Activated CD4-positive, alpha-beta memory T cell treated with anti-CD3 and anti-CD28 coated beads for 36 hours (primary cell): ENCODE measurements at regions of chr7 and their contacts with region 1.

Region 1: DNA sequence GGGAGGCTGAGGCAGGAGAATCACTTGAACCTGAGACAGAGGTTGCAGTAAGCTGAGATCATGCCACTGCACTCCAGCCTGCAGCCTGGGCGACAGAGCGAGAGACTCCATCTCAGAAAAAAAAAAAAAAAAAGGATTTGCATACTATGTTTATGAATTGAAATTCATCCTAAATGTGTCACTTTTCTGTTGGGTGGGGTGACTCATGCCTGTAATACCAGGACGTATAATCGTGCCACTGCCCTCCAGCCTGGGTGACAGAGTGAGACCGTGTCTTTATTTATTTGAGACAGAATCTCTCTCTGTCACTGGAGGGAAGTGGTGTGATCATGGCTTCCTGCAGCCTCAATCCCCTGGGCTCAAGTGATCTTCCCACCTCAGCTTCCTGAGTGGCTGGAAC is 5.8 kb downstream of the ZNF212 start:
- DNase-seq: peak; percentile 82
- H3K4me3 Mint-ChIP-seq: peak overlapping the region; percentile 43
- H3K27ac Mint-ChIP-seq: peak overlapping the region; percentile 91
- H3K4me1 Mint-ChIP-seq: peaks cover 66% of the 10 kb centered on the region
- H3K27me3 Mint-ChIP-seq: no peaks in the 10 kb centered on the region

Region 2: GRCh38 chr7:149180722-149181449 is 64.4 kb before region 1 on chr7:
- CTCF ChIA-PET with region 1: no interaction called
- POLR2A ChIA-PET with region 1: no interaction called
- intact Hi-C with region 1: no loop called
- DNase-seq: no peak
- H3K4me3 Mint-ChIP-seq: no peak overlapping the region
- H3K27ac Mint-ChIP-seq: peak overlapping the region; percentile 29
- H3K4me1 Mint-ChIP-seq: no peaks in the 10 kb centered on the region
- H3K27me3 Mint-ChIP-seq: no peaks in the 10 kb centered on the region

Region 3: DNA sequence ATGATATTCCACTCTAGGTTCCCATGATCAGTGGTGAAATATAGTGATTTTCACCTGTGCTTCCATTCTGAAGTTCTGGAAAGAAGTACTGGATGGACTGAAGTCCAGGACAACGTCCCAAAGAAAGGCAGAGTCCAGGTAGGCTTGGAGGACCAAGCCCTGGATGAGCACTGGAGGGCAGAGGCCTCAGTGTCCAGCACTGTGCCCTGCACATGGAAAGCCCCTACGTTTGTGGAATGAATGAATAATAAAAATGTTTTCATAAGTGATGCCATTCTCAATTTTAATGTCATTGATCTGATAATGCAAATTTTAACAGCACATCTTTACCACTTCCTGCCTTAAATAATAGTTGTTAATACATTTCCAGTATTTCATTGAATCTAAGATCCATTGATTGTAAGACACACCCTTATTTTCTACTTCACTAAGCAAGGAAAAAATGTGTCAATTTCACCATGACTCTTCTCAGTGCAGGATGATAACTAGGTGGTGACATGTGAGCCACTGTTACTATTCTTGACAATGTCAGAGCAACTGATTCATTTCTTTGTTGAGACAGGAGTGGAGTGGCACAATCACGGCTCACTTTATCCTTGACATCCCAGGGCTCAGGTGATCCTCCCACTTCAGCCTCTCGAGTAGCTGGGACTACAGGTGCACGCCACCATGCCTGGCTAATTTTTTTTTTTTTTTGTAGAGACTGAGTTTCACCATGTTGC is 52.0 kb after region 1 on chr7:
- CTCF ChIA-PET with region 1: no interaction called
- POLR2A ChIA-PET with region 1: no interaction called
- intact Hi-C with region 1: loop called (anchors 1 kb)
- DNase-seq: peak; percentile 38
- H3K4me3 Mint-ChIP-seq: no peak overlapping the region
- H3K27ac Mint-ChIP-seq: peak overlapping the region; percentile 92
- H3K4me1 Mint-ChIP-seq: peaks cover 16% of the 10 kb centered on the region
- H3K27me3 Mint-ChIP-seq: no peaks in the 10 kb centered on the region

Region 4: GRCh38 chr7:149598721-149599306 is 353.6 kb after region 1 on chr7:
- CTCF ChIA-PET with region 1: no interaction called
- POLR2A ChIA-PET with region 1: interaction called, 3 read pairs
- intact Hi-C with region 1: loop called (anchors 2 kb)
- DNase-seq: peak; percentile 66
- H3K4me3 Mint-ChIP-seq: no peak overlapping the region
- H3K27ac Mint-ChIP-seq: peak overlapping the region; percentile 72
- H3K4me1 Mint-ChIP-seq: peaks cover 35% of the 10 kb centered on the region
- H3K27me3 Mint-ChIP-seq: no peaks in the 10 kb centered on the region